Activated CD8-positive, alpha-beta T cell treated with anti-CD3 and anti-CD28 coated beads, Interleukin-2, amount 10 ng/mL, durations not matched to agents 7 days and 5 days (primary cell): ENCODE measurements at regions of chr5 and their contacts with region 1.

Region 1: GRCh38 chr5:119315516-119315949 is 40.3 kb upstream of the TNFAIP8 start:
- DNase-seq: peak; percentile 74
- ATAC-seq: peak; percentile 77
- H3K4me3 Mint-ChIP-seq: peak overlapping the region; percentile 40
- H3K27ac Mint-ChIP-seq: peak overlapping the region; percentile 87
- H3K4me1 Mint-ChIP-seq: peaks cover 94% of the 10 kb centered on the region
- H3K27me3 Mint-ChIP-seq: no peaks in the 10 kb centered on the region

Region 2: DNA sequence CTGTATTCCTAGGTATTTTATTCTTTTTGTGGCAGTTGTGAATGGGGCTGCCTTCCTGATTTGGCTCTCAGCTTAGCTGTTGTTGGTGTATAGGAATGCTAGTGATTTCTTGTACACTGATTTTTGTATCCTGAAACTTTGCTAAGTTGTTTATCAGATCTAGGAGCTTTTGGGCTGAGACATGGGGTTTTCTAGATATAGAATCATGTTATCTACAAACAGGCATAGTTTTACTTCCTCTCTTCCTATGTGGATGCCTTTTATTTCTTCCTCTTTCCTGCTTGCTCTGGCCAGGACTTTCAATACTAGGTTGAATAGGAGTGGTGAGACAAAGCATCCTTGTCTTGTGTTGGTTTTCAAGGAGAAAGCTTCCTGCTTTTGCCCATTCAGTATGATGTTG is 114.7 kb before region 1 on chr5:
- CTCF ChIA-PET with region 1: no interaction called
- POLR2A ChIA-PET with region 1: no interaction called
- DNase-seq: no peak
- ATAC-seq: no peak
- H3K4me3 Mint-ChIP-seq: no peak overlapping the region
- H3K27ac Mint-ChIP-seq: no peak overlapping the region
- H3K4me1 Mint-ChIP-seq: no peaks in the 10 kb centered on the region
- H3K27me3 Mint-ChIP-seq: no peaks in the 10 kb centered on the region

Region 3: GRCh38 chr5:119274767-119275130 is 40.8 kb before region 1 on chr5:
- CTCF ChIA-PET with region 1: interaction called, 16 read pairs
- POLR2A ChIA-PET with region 1: interaction called, 3 read pairs
- DNase-seq: no peak
- ATAC-seq: peak; percentile 35
- H3K4me3 Mint-ChIP-seq: peak overlapping the region; percentile 75
- H3K27ac Mint-ChIP-seq: peak overlapping the region; percentile 87
- H3K4me1 Mint-ChIP-seq: peaks cover 88% of the 10 kb centered on the region
- H3K27me3 Mint-ChIP-seq: peaks cover 2% of the 10 kb centered on the region

Region 4: DNA sequence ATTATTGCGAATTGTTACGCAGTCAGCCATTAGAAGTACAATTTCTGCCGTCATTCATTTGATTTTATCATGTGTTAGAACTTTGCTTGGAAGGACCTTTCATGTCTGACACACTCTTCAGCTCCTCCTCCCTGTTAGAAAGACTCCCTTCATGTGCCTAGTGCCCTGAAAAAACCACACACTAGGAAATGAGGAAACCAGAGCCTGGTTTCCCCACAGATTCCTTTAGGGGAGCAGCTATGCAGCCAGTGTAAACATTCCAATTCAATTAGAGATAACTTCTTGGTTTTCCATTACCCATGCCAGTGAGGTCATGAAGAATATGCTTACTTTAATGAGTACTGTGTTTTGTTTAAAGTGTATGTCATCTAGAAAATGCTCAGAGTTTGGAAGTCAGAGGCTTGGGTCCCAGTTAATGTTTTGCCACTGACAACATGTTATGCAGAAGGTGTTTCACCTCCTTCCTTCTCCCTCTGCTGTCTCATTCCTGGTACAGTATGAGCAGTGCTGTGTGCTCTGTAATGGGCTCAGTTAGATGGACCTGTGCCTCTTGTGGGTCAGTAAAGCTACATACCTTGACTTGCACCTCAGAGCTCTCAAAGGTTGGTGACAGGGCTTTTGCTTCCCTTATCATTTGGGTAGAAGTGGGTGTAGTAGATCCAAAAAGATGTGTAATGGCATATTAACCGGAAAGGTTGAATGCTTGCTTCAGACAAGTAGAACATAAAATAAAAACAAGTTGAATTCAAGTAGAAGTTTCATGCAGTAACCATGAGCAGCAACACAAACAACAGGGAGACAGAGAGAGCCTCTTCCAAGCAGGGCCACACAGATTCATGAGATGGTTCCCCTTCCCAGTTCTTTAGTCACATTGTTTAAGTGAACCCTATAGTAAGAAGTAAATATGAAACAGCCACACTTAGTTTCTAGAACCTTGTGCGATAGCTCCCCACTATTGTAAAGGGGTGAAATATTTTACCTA is 12.3 kb before region 1 on chr5:
- CTCF ChIA-PET with region 1: interaction called, 25 read pairs
- POLR2A ChIA-PET with region 1: interaction called, 4 read pairs
- DNase-seq: peak; percentile 19
- ATAC-seq: peak; percentile 44
- H3K4me3 Mint-ChIP-seq: no peak overlapping the region
- H3K27ac Mint-ChIP-seq: peak overlapping the region; percentile 73
- H3K4me1 Mint-ChIP-seq: peaks cover 95% of the 10 kb centered on the region
- H3K27me3 Mint-ChIP-seq: no peaks in the 10 kb centered on the region

Region 5: GRCh38 chr5:119355685-119356611 is 40.4 kb after region 1 on chr5 and contains the start of gene TNFAIP8:
- CTCF ChIA-PET with region 1: interaction called, 28 read pairs
- POLR2A ChIA-PET with region 1: interaction called, 7 read pairs
- DNase-seq: peak; percentile 53
- ATAC-seq: peak; percentile 69
- H3K4me3 Mint-ChIP-seq: peak within 1 kb of the TSS; percentile 83
- H3K27ac Mint-ChIP-seq: peak within 1 kb of the TSS; percentile 88
- H3K4me1 Mint-ChIP-seq: peaks cover 88% of the 10 kb centered on the region
- H3K27me3 Mint-ChIP-seq: no peaks in the 10 kb centered on the region
- total RNA-seq, gene TNFAIP8: 123 to 127 TPM

Region 6: GRCh38 chr5:119367502-119368237 is 52.1 kb after region 1 on chr5:
- CTCF ChIA-PET with region 1: interaction called, 16 read pairs
- POLR2A ChIA-PET with region 1: interaction called, 4 read pairs
- DNase-seq: no peak
- ATAC-seq: peak; percentile 61
- H3K4me3 Mint-ChIP-seq: peak overlapping the region; percentile 40
- H3K27ac Mint-ChIP-seq: peak overlapping the region; percentile 88
- H3K4me1 Mint-ChIP-seq: peaks cover 83% of the 10 kb centered on the region
- H3K27me3 Mint-ChIP-seq: no peaks in the 10 kb centered on the region